Endothelial cell of umbilical vein (primary cell): ENCODE measurements at regions of chr6 and their contacts with region 1.

Region 1: GRCh38 chr6:169851641-169852503 is 100.5 kb downstream of the ERMARD start:
- DNase-seq: peak; percentile 93
- H3K4me3 ChIP-seq: peak overlapping the region in 1 of 3 experiments; percentile 6
- H3K27ac ChIP-seq: peak overlapping the region; percentile 95
- H3K4me1 ChIP-seq: peaks cover 24% of the 10 kb centered on the region
- H3K27me3 ChIP-seq: no peaks in the 10 kb centered on the region
- CTCF ChIP-seq: no peak
- POLR2A ChIP-seq: peak; percentile 58

Region 2: DNA sequence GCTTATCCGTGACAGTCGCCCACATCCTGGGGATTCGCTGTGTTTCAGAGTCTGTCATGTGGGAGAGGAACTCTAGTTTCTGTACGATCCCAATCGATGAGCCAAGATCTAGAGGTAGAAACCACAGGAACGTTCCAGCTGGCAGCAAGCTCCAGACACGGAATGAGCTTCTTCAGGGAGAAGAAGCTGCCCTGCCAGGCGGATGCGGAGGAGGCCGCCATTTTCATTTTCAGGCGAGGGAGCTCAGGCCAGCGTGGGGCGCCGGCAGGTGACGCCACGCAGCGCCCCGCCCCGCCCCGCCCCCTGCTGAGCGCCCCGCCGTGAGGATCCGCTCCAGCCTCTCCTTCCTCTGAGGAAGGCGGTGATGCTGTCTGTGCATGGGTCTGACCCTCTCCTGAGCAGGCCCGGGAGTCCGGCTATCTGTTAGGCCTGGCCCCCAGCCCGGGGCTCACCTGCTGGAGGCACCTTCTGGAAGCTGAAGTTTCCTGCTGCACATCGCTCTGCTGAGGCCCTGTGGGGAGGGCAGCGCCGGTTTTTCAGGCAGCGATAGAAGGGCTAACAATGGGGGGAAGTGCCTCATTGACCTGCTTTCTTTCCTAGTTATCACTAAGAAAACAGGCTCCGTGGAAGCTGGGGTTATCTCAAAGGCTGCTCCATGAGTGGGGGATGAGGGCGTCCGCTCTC is 47.1 kb after region 1 on chr6:
- CTCF ChIA-PET with region 1: interaction called, 11 read pairs
- POLR2A ChIA-PET with region 1: no interaction called
- dilution Hi-C with region 1: no loop called
- intact Hi-C with region 1: loop called (anchors 1 kb)
- DNase-seq: peak; percentile 92
- H3K4me3 ChIP-seq: no peak overlapping the region
- H3K27ac ChIP-seq: peak overlapping the region; percentile 2
- H3K4me1 ChIP-seq: peaks cover 13% of the 10 kb centered on the region
- H3K27me3 ChIP-seq: no peaks in the 10 kb centered on the region
- CTCF ChIP-seq: no peak
- POLR2A ChIP-seq: no peak

Region 3: DNA sequence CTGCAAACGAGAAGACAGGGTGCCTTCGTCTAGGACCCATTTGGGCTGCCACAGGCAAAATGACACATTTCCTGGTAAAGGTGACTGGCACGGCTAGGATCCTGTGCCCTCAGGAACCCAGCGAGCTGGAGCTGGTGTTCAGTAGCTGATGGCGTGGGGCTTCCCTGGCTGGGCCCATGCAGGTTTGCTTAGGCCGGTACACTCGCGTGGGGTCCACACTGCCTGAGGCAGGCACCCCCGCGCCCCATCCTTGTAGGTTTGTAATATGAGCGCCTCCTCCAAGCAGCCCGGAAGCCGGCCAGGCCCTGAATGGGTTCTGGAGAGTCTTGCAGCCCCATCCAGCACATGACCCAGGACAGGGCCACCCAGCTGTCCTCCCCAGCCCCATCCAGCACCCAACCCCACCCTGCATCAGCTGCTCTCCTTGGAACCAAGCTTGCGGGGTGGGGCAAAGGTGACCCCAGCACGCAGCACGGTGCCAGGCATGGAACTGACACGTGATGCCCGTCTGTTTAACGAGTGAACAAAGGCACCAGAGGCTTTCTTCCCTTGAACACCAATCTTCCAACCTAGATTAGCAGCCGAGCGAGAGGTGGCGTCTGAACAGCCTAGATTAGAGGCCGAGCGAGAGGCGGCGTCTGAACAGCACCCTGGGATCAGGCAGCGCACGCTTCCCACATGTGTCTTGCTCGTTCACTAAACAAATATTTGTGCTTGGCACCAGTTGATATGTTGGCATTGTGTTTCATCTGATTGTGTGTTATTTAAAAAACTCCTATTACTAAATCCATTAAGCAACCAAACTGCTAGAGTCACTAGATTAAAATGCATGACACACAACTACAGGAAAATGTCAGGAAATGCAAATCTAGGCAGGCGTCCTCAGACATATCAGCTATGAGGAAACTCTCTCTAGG is 326.9 kb after region 1 on chr6:
- CTCF ChIA-PET with region 1: no interaction called
- POLR2A ChIA-PET with region 1: no interaction called
- dilution Hi-C with region 1: no loop called
- intact Hi-C with region 1: loop called (anchors 1 kb)
- DNase-seq: peak; percentile 76
- H3K4me3 ChIP-seq: no peak overlapping the region
- H3K27ac ChIP-seq: peak overlapping the region; percentile 66
- H3K4me1 ChIP-seq: peaks cover 20% of the 10 kb centered on the region
- H3K27me3 ChIP-seq: no peaks in the 10 kb centered on the region
- CTCF ChIP-seq: no peak
- POLR2A ChIP-seq: no peak

Region 4: GRCh38 chr6:170306324-170307079 is 454.6 kb after region 1 on chr6 and contains the start of gene FAM120B:
- CTCF ChIA-PET with region 1: no interaction called
- POLR2A ChIA-PET with region 1: no interaction called
- dilution Hi-C with region 1: no loop called
- intact Hi-C with region 1: loop called (anchors 5 kb)
- DNase-seq: peak; percentile 96
- H3K4me3 ChIP-seq: peak within 1 kb of the TSS; percentile 48 to 86 (median 78)
- H3K27ac ChIP-seq: peak within 1 kb of the TSS; percentile 73
- H3K4me1 ChIP-seq: peaks cover 11% of the 10 kb centered on the region
- H3K27me3 ChIP-seq: no peaks in the 10 kb centered on the region
- CTCF ChIP-seq: no peak
- POLR2A ChIP-seq: peak; percentile 97
- total RNA-seq, gene FAM120B: 28.1 and 28.2 TPM in 2 replicates